HepG2 (cell line): ENCODE measurements at regions of chr16 and their contacts with region 1.

Region 1: GRCh38 chr16:80265624-80266306 is 275.0 kb upstream of the DYNLRB2 start:
- DNase-seq: peak; percentile 99
- ATAC-seq: peak; percentile 92
- H3K4me3 ChIP-seq: peak overlapping the region; percentile 12 to 36 (median 22); a peak in 4 of 6 replicates
- H3K27ac ChIP-seq: peak overlapping the region; percentile 87
- H3K4me1 ChIP-seq: peaks cover 57% of the 10 kb centered on the region
- H3K27me3 ChIP-seq: no peaks in the 10 kb centered on the region
- CTCF ChIP-seq: no peak
- EP300 ChIP-seq: peak; percentile 98
- POLR2A ChIP-seq: peak in 1 of 2 experiments; percentile 38; a peak in 1 of 4 replicates
- RAD21 ChIP-seq: no peak

Region 2: GRCh38 chr16:80231888-80232287 is 33.9 kb before region 1 on chr16:
- CTCF ChIA-PET with region 1: no interaction called
- POLR2A ChIA-PET with region 1: interaction called, 44 read pairs
- in situ Hi-C with region 1: no loop called
- intact Hi-C with region 1: no loop called
- DNase-seq: peak; percentile 48
- ATAC-seq: peak; percentile 82
- H3K4me3 ChIP-seq: no peak overlapping the region
- H3K27ac ChIP-seq: no peak overlapping the region
- H3K4me1 ChIP-seq: peaks cover 27% of the 10 kb centered on the region; the same call in 1 of the 2 replicates
- H3K27me3 ChIP-seq: no peaks in the 10 kb centered on the region
- CTCF ChIP-seq: no peak
- EP300 ChIP-seq: peak in 1 of 2 experiments; percentile 15; a peak in 1 of 4 replicates
- POLR2A ChIP-seq: no peak
- RAD21 ChIP-seq: no peak

Region 3: GRCh38 chr16:80277182-80277581 is 11.4 kb after region 1 on chr16:
- CTCF ChIA-PET with region 1: no interaction called
- POLR2A ChIA-PET with region 1: interaction called, 17 read pairs
- in situ Hi-C with region 1: no loop called
- intact Hi-C with region 1: no loop called
- DNase-seq: no peak
- ATAC-seq: peak; percentile 92
- H3K4me3 ChIP-seq: no peak overlapping the region
- H3K27ac ChIP-seq: no peak overlapping the region
- H3K4me1 ChIP-seq: no peaks in the 10 kb centered on the region
- H3K27me3 ChIP-seq: no peaks in the 10 kb centered on the region
- CTCF ChIP-seq: peak; percentile 60
- EP300 ChIP-seq: no peak
- POLR2A ChIP-seq: no peak
- RAD21 ChIP-seq: no peak

Region 4: DNA sequence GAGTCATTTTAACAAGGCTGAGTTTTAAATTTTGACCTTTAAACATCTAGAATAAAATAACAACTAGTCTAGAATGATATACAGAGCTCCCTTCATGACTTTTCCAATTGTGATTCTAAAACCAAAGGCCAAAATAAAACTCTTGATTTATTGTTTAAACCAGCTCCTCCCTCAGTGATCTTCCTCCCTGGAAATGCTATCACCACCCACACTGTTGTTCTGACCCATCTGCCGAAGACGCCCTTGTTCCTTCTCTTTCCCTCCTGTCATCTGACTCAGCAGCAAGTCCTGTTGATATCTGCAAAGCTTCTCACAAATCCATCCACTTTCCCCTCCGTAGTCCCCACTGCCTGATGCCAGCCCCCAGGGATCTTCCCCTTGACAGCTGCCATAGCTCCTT is 43.4 kb after region 1 on chr16:
- CTCF ChIA-PET with region 1: no interaction called
- POLR2A ChIA-PET with region 1: no interaction called
- in situ Hi-C with region 1: no loop called
- intact Hi-C with region 1: no loop called
- DNase-seq: no peak
- ATAC-seq: no peak
- H3K4me3 ChIP-seq: no peak overlapping the region
- H3K27ac ChIP-seq: no peak overlapping the region
- H3K4me1 ChIP-seq: no peaks in the 10 kb centered on the region
- H3K27me3 ChIP-seq: peaks cover 0 to 4% of the 10 kb centered on the region in 2 experiments; a peak in 1 of 5 replicates
- CTCF ChIP-seq: no peak
- EP300 ChIP-seq: no peak
- POLR2A ChIP-seq: no peak
- RAD21 ChIP-seq: no peak

Region 5: GRCh38 chr16:80407265-80407987 is 141.7 kb after region 1 on chr16:
- CTCF ChIA-PET with region 1: no interaction called
- POLR2A ChIA-PET with region 1: interaction called, 3 read pairs
- in situ Hi-C with region 1: no loop called
- intact Hi-C with region 1: loop called (anchors 1 kb)
- DNase-seq: peak; percentile 92
- ATAC-seq: peak; percentile 99
- H3K4me3 ChIP-seq: peak overlapping the region in 2 of 3 experiments; percentile 8 to 14; a peak in 1 of 6 replicates
- H3K27ac ChIP-seq: peak overlapping the region; percentile 85
- H3K4me1 ChIP-seq: peaks cover 58% of the 10 kb centered on the region
- H3K27me3 ChIP-seq: no peaks in the 10 kb centered on the region
- CTCF ChIP-seq: 0 out of 2 replicates have a peak, but pooled peaks have one; percentile 11
- EP300 ChIP-seq: peak in 1 of 2 experiments; percentile 87; a peak in 2 of 4 replicates
- POLR2A ChIP-seq: no peak
- RAD21 ChIP-seq: no peak